ENCODE measurements at regions of chr17 and their contacts with region 1.

Region 1: DNA sequence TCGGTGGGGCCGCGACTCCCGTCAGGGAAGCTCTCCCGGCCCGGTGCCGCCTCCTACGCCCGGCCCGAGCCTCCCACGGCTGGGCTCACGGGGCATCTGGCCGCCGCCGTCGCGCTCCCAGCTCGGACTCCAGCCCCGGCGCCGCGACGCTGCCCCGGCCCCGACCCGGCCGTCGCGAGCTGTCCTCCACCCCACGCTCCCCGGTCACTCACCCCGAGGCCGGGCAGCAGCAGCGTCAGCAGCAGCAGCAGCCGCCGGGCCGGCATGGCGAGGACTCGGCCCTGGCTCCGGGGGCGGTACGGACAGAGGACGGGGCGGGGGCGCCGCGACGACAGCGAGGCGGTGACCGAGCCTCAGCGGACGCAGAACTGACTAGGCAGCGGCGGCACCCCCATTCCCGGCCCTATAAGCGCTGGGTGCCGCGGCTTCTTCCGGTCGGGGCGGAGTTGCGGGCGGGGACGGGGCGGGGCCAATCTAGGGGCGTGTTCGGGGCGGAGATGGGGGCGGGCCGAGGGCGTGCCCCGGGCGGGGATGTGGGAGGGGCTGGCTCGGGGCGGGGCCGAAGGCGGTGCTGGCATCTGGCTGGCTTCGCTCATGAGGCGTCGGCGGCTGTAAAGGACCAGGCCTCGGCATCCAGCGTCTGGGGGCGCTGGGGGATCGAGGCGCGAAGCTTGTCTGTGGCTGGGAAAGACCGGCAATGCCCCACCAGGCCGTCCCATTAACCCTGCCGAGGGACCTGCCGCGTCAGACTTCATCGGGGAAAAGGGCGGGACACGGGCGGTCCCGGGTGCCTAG is at the start of gene ERN1:
- DNase-seq: peak; percentile 84 to 93 (median 91)
- ATAC-seq: peak; percentile 96
- H3K4me3 ChIP-seq: peak within 1 kb of the TSS; percentile 69
- H3K4me3 Mint-ChIP-seq: peak within 1 kb of the TSS; percentile 85 to 97 (median 94)
- H3K27ac ChIP-seq: peak within 1 kb of the TSS; percentile 77
- H3K27ac Mint-ChIP-seq: peak within 1 kb of the TSS; percentile 83 to 98 (median 93)
- H3K4me1 ChIP-seq: peaks cover 12 to 32% of the 10 kb centered on the region in 2 donors
- H3K4me1 Mint-ChIP-seq: peaks cover 28 to 57% (median 53%) of the 10 kb centered on the region in 7 donors
- H3K27me3 ChIP-seq: no peaks in the 10 kb centered on the region
- H3K27me3 Mint-ChIP-seq: no peaks in the 10 kb centered on the region
- total RNA-seq, gene ERN1: 52.6 to 110 (median 62.9) TPM

Region 2: GRCh38 chr17:63911657-63912426 is 218.1 kb before region 1 on chr17:
- CTCF ChIA-PET with region 1: interaction called, 20 read pairs
- POLR2A ChIA-PET with region 1: no interaction called
- intact Hi-C with region 1: loop called (anchors 1 to 2 kb)
- DNase-seq: peak; percentile 30 to 64 (median 49)
- ATAC-seq: peak; percentile 88
- H3K4me3 ChIP-seq: no peak overlapping the region
- H3K4me3 Mint-ChIP-seq: peak overlapping the region in 1 of 10 donors; percentile 25
- H3K27ac ChIP-seq: no peak overlapping the region
- H3K27ac Mint-ChIP-seq: peak overlapping the region in 1 of 9 donors; percentile 78
- H3K4me1 ChIP-seq: no peaks in the 10 kb centered on the region
- H3K4me1 Mint-ChIP-seq: peaks cover 0 to 10% (median 0%) of the 10 kb centered on the region in 7 donors
- H3K27me3 ChIP-seq: no peaks in the 10 kb centered on the region
- H3K27me3 Mint-ChIP-seq: peaks cover 0 to 28% (median 0%) of the 10 kb centered on the region in 5 donors

Region 3: GRCh38 chr17:63961355-63962212 is 168.4 kb before region 1 on chr17:
- CTCF ChIA-PET with region 1: no interaction called
- POLR2A ChIA-PET with region 1: no interaction called
- intact Hi-C with region 1: loop called in 1 of 2 experiments (anchors 1 kb)
- DNase-seq: peak in 2 of 9 donors; percentile 48 to 59
- ATAC-seq: peak; percentile 81
- H3K4me3 ChIP-seq: no peak overlapping the region
- H3K4me3 Mint-ChIP-seq: peak overlapping the region in 3 of 10 donors; percentile 52 to 68 (median 62)
- H3K27ac ChIP-seq: no peak overlapping the region
- H3K27ac Mint-ChIP-seq: peak overlapping the region in 2 of 9 donors; percentile 12 to 52
- H3K4me1 ChIP-seq: peaks cover 5% of the 10 kb centered on the region in 2 donors
- H3K4me1 Mint-ChIP-seq: peaks cover 4 to 15% (median 8%) of the 10 kb centered on the region in 7 donors
- H3K27me3 ChIP-seq: no peaks in the 10 kb centered on the region
- H3K27me3 Mint-ChIP-seq: no peaks in the 10 kb centered on the region

Region 4: DNA sequence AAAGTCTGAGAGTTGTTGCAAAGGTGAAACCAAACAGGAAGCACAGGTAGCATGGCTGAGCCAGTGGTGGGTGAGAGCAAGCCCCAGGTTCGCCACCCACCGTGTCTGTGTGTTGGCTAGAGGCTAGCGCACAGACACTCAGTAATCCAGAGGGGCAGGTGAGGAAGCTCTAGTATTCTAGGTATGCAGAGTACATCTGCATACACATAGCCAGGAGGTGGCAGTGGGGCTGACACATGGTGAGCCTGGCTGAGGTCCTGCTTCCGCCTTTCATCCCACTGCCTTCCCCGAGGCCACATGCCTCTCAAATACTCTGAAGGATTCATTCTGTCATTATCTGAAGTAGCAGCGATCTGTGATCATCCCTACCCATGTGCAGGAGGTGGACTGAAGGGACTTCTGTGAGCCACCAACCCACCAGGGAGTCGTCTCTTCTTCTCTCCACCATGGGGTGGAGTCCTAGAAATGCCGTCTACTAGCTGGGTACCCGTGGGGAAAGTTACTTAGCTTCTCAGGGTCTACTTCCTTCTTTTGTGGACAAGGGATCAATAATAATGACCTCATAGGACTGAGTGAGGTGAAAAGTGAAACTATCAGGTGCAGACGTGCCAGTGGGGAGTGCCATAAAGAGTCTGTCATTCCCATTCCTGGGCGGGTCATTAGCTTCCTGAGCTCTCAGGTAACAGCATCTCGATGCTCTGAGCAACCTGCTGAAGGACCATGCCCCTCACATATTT is 73.5 kb before region 1 on chr17:
- CTCF ChIA-PET with region 1: interaction called, 142 read pairs
- POLR2A ChIA-PET with region 1: interaction called, 88 read pairs
- intact Hi-C with region 1: loop called (anchors 1 kb)
- DNase-seq: no peak
- ATAC-seq: peak; percentile 37
- H3K4me3 ChIP-seq: no peak overlapping the region
- H3K4me3 Mint-ChIP-seq: peak overlapping the region in 2 of 10 donors; percentile 2 to 59
- H3K27ac ChIP-seq: no peak overlapping the region
- H3K27ac Mint-ChIP-seq: peak overlapping the region; percentile 24 to 88 (median 79)
- H3K4me1 ChIP-seq: peaks cover 19 to 48% of the 10 kb centered on the region in 2 donors
- H3K4me1 Mint-ChIP-seq: peaks cover 17 to 70% (median 31%) of the 10 kb centered on the region in 7 donors
- H3K27me3 ChIP-seq: no peaks in the 10 kb centered on the region
- H3K27me3 Mint-ChIP-seq: no peaks in the 10 kb centered on the region

Region 5: DNA sequence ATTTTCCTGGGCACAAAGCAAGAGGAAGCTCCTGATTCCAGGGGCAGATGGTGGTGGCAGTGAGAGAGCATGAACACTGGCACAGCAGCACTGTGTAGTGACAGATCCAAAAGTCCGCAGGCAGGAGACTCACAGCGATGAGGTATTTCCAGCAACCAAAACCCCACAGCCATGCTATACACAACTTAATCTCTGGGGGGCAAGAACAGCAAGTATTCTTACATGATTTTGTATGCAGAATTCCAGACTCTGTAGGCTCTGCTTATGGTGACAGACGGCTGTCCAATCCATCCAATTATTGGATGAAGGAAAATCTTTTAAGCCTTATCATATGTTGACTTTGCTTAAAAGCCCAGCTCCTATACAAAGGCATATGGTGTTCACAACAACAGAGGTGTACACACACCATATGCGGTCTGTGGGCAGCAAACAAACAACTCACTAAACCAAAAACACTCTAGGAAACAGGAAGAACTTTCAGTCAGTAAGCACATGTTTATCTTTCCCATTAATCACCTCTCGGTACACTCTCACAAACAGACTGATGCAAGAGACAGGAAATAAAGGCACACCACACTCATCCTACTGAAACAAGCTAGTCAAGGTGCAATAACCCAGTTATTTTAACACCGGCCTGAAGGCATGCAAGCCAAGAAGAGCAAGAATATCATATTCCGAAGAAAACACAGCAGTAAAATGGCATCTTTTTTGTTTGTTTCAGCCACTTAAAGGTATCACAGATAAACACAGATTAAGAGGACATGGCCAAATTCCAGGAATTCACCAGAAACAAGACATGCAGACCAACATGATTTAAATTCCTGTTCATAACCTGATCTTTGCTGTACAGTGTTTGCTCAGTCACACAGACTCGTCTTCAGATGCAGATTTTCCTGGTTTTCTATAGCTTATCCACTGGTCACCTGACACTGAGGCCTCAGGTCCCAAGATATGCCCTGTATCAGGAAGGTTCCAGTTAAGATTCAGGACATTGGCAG is 47.9 kb before region 1 on chr17:
- CTCF ChIA-PET with region 1: interaction called, 7 read pairs
- POLR2A ChIA-PET with region 1: interaction called, 23 read pairs
- intact Hi-C with region 1: loop called (anchors 1 to 2 kb)
- DNase-seq: peak in 5 of 9 donors; percentile 21 to 36 (median 30)
- ATAC-seq: peak; percentile 81
- H3K4me3 ChIP-seq: peak overlapping the region; percentile 4
- H3K4me3 Mint-ChIP-seq: peak overlapping the region in 8 of 10 donors; percentile 49 to 84 (median 72)
- H3K27ac ChIP-seq: peak overlapping the region; percentile 37
- H3K27ac Mint-ChIP-seq: peak overlapping the region in 6 of 9 donors; percentile 52 to 91 (median 74)
- H3K4me1 ChIP-seq: peaks cover 49 to 75% of the 10 kb centered on the region in 2 donors
- H3K4me1 Mint-ChIP-seq: peaks cover 7 to 25% (median 11%) of the 10 kb centered on the region in 7 donors
- H3K27me3 ChIP-seq: no peaks in the 10 kb centered on the region
- H3K27me3 Mint-ChIP-seq: no peaks in the 10 kb centered on the region

Region 6: GRCh38 chr17:64262417-64263260 is 132.7 kb after region 1 on chr17 and contains the start of gene TEX2:
- CTCF ChIA-PET with region 1: no interaction called
- POLR2A ChIA-PET with region 1: no interaction called
- intact Hi-C with region 1: loop called in 1 of 2 experiments (anchors 5 kb)
- DNase-seq: peak; percentile 44 to 82 (median 74)
- ATAC-seq: peak; percentile 56
- H3K4me3 ChIP-seq: peak within 1 kb of the TSS; percentile 99
- H3K4me3 Mint-ChIP-seq: peak within 1 kb of the TSS; percentile 87 to 98 (median 94)
- H3K27ac ChIP-seq: peak within 1 kb of the TSS; percentile 90
- H3K27ac Mint-ChIP-seq: peak within 1 kb of the TSS; percentile 87 to 98 (median 93)
- H3K4me1 ChIP-seq: peaks cover 18% of the 10 kb centered on the region in 2 donors
- H3K4me1 Mint-ChIP-seq: peaks cover 22 to 50% (median 42%) of the 10 kb centered on the region in 7 donors
- H3K27me3 ChIP-seq: no peaks in the 10 kb centered on the region
- H3K27me3 Mint-ChIP-seq: peaks cover 0 to 11% (median 5%) of the 10 kb centered on the region in 5 donors
- total RNA-seq, gene TEX2: 14.1 to 24.2 (median 14.4) TPM

Measured in naive thymus-derived CD4-positive, alpha-beta T cell (primary cell).